Breast epithelium (tissue), 4 donors: ENCODE measurements at regions of chr2 and their contacts with region 1.

Region 1: DNA sequence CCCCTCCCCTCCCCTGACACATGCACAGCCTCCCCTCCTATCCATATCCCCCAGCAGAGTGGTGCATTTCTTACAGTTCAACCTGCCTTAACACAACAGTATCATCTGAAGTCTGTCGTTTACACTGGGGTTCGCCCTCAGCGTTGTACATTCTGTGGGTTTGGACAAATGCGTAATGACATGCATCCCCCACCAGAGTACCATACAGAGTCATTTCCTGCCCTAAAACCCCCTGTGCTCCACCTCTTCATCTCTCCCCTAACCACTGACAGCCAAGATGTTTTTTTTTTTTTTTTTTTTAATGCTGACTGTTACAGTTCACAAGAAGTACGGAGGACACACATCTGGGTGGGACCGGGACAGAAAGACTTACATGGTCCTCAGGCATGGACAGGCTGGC is 22.6 kb downstream of the POMC start:
- DNase-seq: no peak
- H3K4me3 ChIP-seq: no peak overlapping the region
- H3K27ac ChIP-seq: no peak overlapping the region
- H3K4me1 ChIP-seq: no peaks in the 10 kb centered on the region
- H3K27me3 ChIP-seq: no peaks in the 10 kb centered on the region
- CTCF ChIP-seq: no peak
- POLR2A ChIP-seq: no peak

Region 2: GRCh38 chr2:24164125-24164973 is 981.5 kb before region 1 on chr2:
- intact Hi-C with region 1: no loop called
- DNase-seq: no peak
- H3K4me3 ChIP-seq: no peak overlapping the region
- H3K27ac ChIP-seq: no peak overlapping the region
- H3K4me1 ChIP-seq: no peaks in the 10 kb centered on the region
- H3K27me3 ChIP-seq: no peaks in the 10 kb centered on the region
- CTCF ChIP-seq: peak in 1 of 3 donors; percentile 52
- POLR2A ChIP-seq: no peak

Region 3: GRCh38 chr2:26577434-26578112 is 1431.8 kb after region 1 on chr2:
- intact Hi-C with region 1: loop called (anchors 5 kb)
- DNase-seq: peak; percentile 40 to 67
- H3K4me3 ChIP-seq: no peak overlapping the region
- H3K27ac ChIP-seq: no peak overlapping the region
- H3K4me1 ChIP-seq: no peaks in the 10 kb centered on the region
- H3K27me3 ChIP-seq: peaks cover 0 to 12% of the 10 kb centered on the region in 2 donors
- CTCF ChIP-seq: peak; percentile 83 to 93 (median 93)
- POLR2A ChIP-seq: no peak